PC-3 (cell line): ENCODE measurements at regions of chr9 and their contacts with region 1.

Region 1: DNA sequence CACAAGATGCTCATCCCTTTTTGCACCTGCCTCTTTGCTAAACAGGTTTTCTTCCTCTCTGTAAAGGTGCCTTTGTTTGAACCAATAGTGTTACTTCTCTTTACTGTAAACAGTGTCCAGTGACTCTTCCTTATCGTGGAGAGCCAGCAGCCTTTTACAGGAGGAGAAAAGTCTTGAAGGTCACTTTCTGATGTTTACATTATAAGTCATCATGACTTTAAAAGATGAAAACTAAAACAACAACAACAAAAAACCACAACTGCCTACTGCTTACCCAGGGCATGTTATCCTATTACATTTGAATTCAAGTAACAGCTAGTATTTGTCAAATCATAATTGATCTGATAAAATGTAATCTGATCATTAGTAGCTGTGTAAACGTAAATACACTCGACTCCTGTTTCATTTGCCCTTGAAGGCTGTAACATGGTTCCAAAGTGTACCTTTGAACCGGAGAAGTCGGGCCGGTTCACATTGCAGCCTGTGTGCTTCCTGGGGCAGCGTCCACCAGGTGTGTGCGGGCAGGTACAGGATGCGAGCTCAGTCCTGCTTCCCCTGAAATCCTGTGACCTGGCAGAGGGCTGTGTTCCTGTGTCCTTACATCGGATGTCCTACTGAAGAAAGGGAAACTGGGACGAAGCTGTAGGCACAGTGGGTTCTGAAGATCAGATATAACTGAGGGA is 118.1 kb downstream of the C9orf152 start:
- DNase-seq: peak; percentile 68
- ATAC-seq: peak; percentile 92
- H3K4me3 ChIP-seq: no peak overlapping the region
- H3K27ac ChIP-seq: peak overlapping the region; percentile 15; the same call in 1 of the 2 replicates
- H3K4me1 ChIP-seq: peaks cover 17% of the 10 kb centered on the region
- H3K27me3 ChIP-seq: no peaks in the 10 kb centered on the region
- CTCF ChIP-seq: no peak

Region 2: GRCh38 chr9:109934857-109935215 is 155.0 kb before region 1 on chr9:
- CTCF ChIA-PET with region 1: no interaction called
- POLR2A ChIA-PET with region 1: no interaction called
- intact Hi-C with region 1: no loop called
- DNase-seq: no peak
- ATAC-seq: no peak
- H3K4me3 ChIP-seq: no peak overlapping the region
- H3K27ac ChIP-seq: no peak overlapping the region
- H3K4me1 ChIP-seq: no peaks in the 10 kb centered on the region
- H3K27me3 ChIP-seq: no peaks in the 10 kb centered on the region
- CTCF ChIP-seq: no peak

Region 3: GRCh38 chr9:110133608-110134210 is 43.9 kb after region 1 on chr9:
- CTCF ChIA-PET with region 1: no interaction called
- POLR2A ChIA-PET with region 1: no interaction called
- intact Hi-C with region 1: loop called (anchors 1 kb)
- DNase-seq: peak; percentile 86
- ATAC-seq: peak; percentile 89
- H3K4me3 ChIP-seq: no peak overlapping the region
- H3K27ac ChIP-seq: peak overlapping the region; percentile 91
- H3K4me1 ChIP-seq: peaks cover 49% of the 10 kb centered on the region
- H3K27me3 ChIP-seq: no peaks in the 10 kb centered on the region
- CTCF ChIP-seq: no peak